BJ (cell line): ENCODE measurements at regions of chr9 and their contacts with region 1.

Region 1: GRCh38 chr9:112819635-112820496 is 69.3 kb downstream of the SNX30 start:
- DNase-seq: peak; percentile 31
- H3K4me3 ChIP-seq: no peak overlapping the region
- H3K27me3 ChIP-seq: no peaks in the 10 kb centered on the region
- CTCF ChIP-seq: peak; percentile 71

Region 2: GRCh38 chr9:112348257-112349007 is 471.4 kb before region 1 on chr9:
- CTCF ChIA-PET with region 1: no interaction called
- POLR2A ChIA-PET with region 1: no interaction called
- DNase-seq: no peak
- H3K4me3 ChIP-seq: peak overlapping the region; percentile 43
- H3K27me3 ChIP-seq: no peaks in the 10 kb centered on the region
- CTCF ChIP-seq: no peak

Region 3: DNA sequence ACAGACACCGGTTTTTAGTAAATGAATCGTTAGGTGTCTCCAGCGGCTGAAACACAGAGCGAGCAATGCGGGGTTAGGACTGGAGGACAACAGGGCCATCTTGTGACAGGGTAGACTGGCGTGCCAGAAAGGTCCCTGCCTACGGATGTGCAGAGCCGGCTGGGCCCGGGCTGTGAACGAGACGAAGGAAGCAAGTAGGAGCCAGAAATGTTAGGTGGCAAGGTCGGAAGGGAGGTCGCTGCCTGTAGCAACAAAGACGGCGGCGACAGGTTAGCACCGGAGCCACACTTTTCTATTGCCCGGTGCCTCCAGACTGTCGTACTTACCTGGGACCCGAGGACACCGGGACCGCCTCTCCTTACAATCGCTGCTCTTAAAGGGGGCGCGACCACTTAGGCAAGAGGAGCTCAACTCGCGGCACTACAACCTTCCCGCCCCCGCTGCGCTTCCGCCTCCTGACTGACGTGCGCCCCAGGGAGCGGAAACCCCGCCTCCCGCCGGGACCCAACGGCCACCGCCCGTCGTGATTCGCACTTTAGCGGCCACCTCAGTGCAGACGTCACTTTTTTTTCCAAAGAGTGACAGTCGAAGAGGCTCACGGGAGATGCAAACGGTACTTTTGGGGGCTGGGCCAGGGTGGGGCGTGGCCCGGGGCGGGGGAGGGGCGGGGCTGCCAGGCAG is 102.1 kb before region 1 on chr9 and contains the start of gene INIP:
- CTCF ChIA-PET with region 1: interaction called, 19 read pairs
- POLR2A ChIA-PET with region 1: no interaction called
- DNase-seq: peak; percentile 77
- H3K4me3 ChIP-seq: peak within 1 kb of the TSS; percentile 77
- H3K27me3 ChIP-seq: no peaks in the 10 kb centered on the region
- CTCF ChIP-seq: 0 out of 2 replicates have a peak, but pooled peaks have one; percentile 12
- polyA plus RNA-seq, gene INIP: 10.9 and 23.8 TPM in 2 replicates

Region 4: DNA sequence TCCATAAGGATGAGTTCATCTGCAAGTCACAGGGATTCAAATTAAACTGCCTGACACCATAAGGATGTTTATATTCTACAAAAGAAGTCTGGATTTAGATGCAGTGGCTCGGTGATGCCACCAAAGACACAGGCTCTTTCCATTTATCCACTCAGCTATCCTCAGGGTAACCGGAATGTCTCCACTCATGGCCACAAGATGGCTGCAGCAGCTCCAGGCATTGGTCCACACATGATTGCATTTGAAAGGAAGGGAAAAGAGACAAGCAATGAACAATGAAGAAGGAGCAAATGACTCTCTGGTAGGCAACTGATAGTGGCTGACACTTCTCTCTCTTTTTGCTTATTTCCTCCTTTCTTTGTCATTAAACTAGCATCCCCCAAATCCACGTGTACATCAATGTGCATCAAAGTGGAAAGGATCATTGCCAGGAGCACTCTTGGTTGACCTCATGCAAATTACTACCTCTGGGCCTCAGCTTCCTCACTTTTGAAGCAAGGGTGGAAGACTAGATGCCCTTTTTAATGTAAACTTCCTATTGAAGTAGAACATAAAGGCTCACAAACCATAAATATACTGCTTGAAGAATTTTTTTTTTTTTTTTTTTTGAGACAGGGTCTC is 76.5 kb before region 1 on chr9:
- CTCF ChIA-PET with region 1: interaction called, 3 read pairs
- POLR2A ChIA-PET with region 1: interaction called, 23 read pairs
- DNase-seq: no peak
- H3K4me3 ChIP-seq: no peak overlapping the region
- H3K27me3 ChIP-seq: no peaks in the 10 kb centered on the region
- CTCF ChIP-seq: peak; percentile 19; the same call in 1 of the 2 replicates

Region 5: DNA sequence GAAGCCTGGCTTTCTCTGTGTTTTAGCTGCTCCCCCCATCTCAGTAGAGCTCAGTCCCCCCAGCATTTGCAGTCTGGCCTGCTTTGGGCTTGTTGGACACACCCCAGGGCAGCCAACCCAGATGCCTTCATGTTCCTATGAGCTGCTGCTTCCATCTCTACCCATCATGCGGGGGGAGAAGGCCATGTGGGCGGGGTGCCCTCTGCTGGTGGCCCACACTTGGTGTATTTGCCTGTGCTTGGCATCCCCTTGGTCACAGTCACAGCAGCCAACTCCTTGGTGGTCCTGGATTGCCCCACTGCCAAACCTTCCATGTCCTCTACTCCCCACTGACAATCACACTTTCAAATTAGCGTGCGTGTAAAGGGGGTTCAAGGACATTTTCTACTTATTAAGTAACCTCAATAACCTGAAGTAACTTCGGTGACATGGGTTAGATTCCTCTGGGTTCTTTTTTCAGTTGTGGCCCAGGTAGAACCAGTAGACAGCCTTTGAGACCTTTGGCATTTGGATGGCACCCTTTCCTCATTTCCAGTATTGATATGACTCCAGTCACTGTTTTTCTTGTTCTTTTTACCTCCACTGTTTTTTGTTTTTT is 26.6 kb before region 1 on chr9:
- CTCF ChIA-PET with region 1: interaction called, 10 read pairs
- POLR2A ChIA-PET with region 1: no interaction called
- DNase-seq: no peak
- H3K4me3 ChIP-seq: no peak overlapping the region
- H3K27me3 ChIP-seq: no peaks in the 10 kb centered on the region
- CTCF ChIP-seq: peak; percentile 87